B cell (primary cell): ENCODE measurements at regions of chr16 and their contacts with region 1.

Region 1: GRCh38 chr16:1428511-1428910 is 2.4 kb upstream of the PERCC1 start:
- DNase-seq: peak; percentile 76
- ATAC-seq: peak; percentile 86
- H3K4me3 ChIP-seq: peak overlapping the region in 1 of 5 experiments; percentile 37
- H3K4me3 Mint-ChIP-seq: no peak overlapping the region
- H3K27ac ChIP-seq: peak overlapping the region in 1 of 2 donors; percentile 50
- H3K27ac Mint-ChIP-seq: no peak overlapping the region
- H3K4me1 ChIP-seq: peaks cover 19 to 41% of the 10 kb centered on the region in 2 donors
- H3K4me1 Mint-ChIP-seq: peaks cover 5% of the 10 kb centered on the region
- H3K27me3 ChIP-seq: no peaks in the 10 kb centered on the region
- H3K27me3 Mint-ChIP-seq: no peaks in the 10 kb centered on the region
- CTCF ChIP-seq: peak; percentile 76

Region 2: GRCh38 chr16:1208239-1208830 is 220.2 kb before region 1 on chr16:
- CTCF ChIA-PET with region 1: no interaction called
- POLR2A ChIA-PET with region 1: no interaction called
- intact Hi-C with region 1: no loop called
- DNase-seq: no peak
- ATAC-seq: no peak
- H3K4me3 ChIP-seq: no peak overlapping the region
- H3K4me3 Mint-ChIP-seq: no peak overlapping the region
- H3K27ac ChIP-seq: no peak overlapping the region
- H3K27ac Mint-ChIP-seq: no peak overlapping the region
- H3K4me1 ChIP-seq: no peaks in the 10 kb centered on the region
- H3K4me1 Mint-ChIP-seq: no peaks in the 10 kb centered on the region
- H3K27me3 ChIP-seq: no peaks in the 10 kb centered on the region
- H3K27me3 Mint-ChIP-seq: no peaks in the 10 kb centered on the region
- CTCF ChIP-seq: no peak

Region 3: GRCh38 chr16:1543085-1543896 is 114.8 kb after region 1 on chr16:
- CTCF ChIA-PET with region 1: interaction called, 22 read pairs
- POLR2A ChIA-PET with region 1: no interaction called
- intact Hi-C with region 1: loop called (anchors 1 kb)
- DNase-seq: peak; percentile 73
- ATAC-seq: peak; percentile 76
- H3K4me3 ChIP-seq: peak overlapping the region in 3 of 5 experiments; percentile 18 to 37 (median 37)
- H3K4me3 Mint-ChIP-seq: peak overlapping the region; percentile 76
- H3K27ac ChIP-seq: peak overlapping the region in 1 of 2 donors; percentile 38
- H3K27ac Mint-ChIP-seq: peak overlapping the region; percentile 51
- H3K4me1 ChIP-seq: peaks cover 25 to 36% of the 10 kb centered on the region in 2 donors
- H3K4me1 Mint-ChIP-seq: peaks cover 23% of the 10 kb centered on the region
- H3K27me3 ChIP-seq: no peaks in the 10 kb centered on the region
- H3K27me3 Mint-ChIP-seq: no peaks in the 10 kb centered on the region
- CTCF ChIP-seq: no peak